Gastrocnemius medialis (tissue), 4 donors: ENCODE measurements at regions of chr4 and their contacts with region 1.

Region 1: DNA sequence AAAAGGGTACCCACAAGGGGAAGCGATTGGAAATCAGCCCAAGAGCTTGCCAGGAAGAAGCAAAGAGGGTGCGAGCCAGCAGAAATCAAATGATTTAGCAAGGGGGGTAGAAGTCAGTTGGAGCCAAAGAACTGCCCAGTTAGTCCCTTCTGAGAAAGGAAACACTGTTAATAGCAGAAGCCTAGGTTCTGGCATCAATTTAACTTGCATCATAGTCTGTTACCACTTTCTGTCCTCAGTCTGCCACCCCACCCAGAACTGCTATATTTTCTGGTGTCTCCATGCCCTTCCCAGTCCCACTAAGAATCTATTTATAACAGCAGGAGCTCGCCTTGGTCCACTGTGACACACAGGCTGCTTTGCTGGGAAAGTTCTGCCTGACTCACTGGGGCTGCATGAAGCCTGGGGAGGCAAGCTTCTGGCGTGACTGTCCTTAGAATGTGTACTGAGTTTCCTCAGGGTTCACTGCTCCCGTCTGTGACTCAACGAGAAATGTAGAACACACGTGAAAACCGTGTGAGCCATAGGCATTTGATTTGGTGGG is 157.8 kb upstream of the TTC29 start:
- DNase-seq: peak; percentile 61 to 73
- ATAC-seq: peak; percentile 96 to 98
- H3K4me3 ChIP-seq: no peak overlapping the region
- H3K27ac ChIP-seq: peak overlapping the region; percentile 53 to 74 (median 72)
- H3K4me1 ChIP-seq: peaks cover 16 to 17% of the 10 kb centered on the region in 2 donors
- H3K27me3 ChIP-seq: no peaks in the 10 kb centered on the region
- CTCF ChIP-seq: no peak
- POLR2A ChIP-seq: no peak

Region 2: DNA sequence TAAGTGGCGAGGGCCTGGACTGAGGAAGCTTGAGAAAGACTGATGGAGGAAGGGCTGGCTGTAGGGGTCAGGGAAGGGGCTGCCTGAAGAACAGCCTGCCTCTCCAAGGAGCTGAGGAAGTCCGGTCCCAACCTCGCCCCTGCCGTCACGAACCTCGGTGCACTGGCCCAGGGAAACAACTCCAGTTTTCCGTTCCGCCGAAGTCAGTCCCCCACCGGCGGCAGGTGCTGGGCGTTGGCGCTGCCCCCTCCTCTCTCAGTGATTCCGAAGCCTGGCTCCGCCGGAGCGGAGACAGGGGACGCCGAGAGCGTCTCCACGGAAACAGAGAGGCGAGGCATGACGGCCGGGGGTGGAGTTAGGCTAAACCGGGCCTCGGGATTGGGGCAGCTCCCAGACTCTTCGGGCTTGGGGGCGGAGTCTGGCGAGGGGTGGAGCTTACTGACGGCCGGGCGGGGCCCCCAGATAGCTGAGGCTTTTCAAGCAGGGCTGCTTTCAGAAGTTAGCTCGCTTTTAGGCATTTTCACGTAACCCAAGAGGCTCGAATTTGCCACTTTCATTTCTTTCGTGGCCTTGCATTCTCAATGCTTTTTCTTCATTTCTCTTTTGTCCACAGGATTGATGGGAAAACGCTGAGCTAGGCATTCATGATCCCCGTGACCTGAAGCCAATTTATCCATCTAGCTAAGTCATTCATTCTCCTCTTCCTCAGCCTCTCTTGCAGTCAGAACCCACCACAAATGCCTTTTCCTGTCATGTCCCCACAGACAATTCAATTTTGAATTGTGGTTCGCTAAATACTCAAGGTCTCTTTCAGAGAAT is 157.7 kb before region 1 on chr4 and contains the start of gene TTC29:
- in situ Hi-C with region 1: no loop called
- intact Hi-C with region 1: loop called (anchors 10 kb)
- DNase-seq: peak; percentile 75 to 77
- ATAC-seq: peak; percentile 98
- H3K4me3 ChIP-seq: peak within 1 kb of the TSS; percentile 57 to 70 (median 66)
- H3K27ac ChIP-seq: no peak within 1 kb of the TSS
- H3K4me1 ChIP-seq: peaks cover 7 to 8% of the 10 kb centered on the region in 2 donors
- H3K27me3 ChIP-seq: no peaks in the 10 kb centered on the region
- CTCF ChIP-seq: no peak
- POLR2A ChIP-seq: no peak
- total RNA-seq, gene TTC29: not detected